ENCODE measurements at regions of chr19 and their contacts with region 1.

Region 1: GRCh38 chr19:16771618-16772017 is 52.0 kb downstream of the NWD1 start:
- DNase-seq: peak in 1 of 2 donors; percentile 89
- H3K4me3 ChIP-seq: no peak overlapping the region
- H3K27ac ChIP-seq: no peak overlapping the region
- H3K4me1 ChIP-seq: no peaks in the 10 kb centered on the region
- H3K27me3 ChIP-seq: no peaks in the 10 kb centered on the region
- CTCF ChIP-seq: peak; percentile 57 to 85 (median 83)

Region 2: GRCh38 chr19:16737911-16738310 is 33.7 kb before region 1 on chr19:
- intact Hi-C with region 1: no loop called
- DNase-seq: no peak
- H3K4me3 ChIP-seq: no peak overlapping the region
- H3K27ac ChIP-seq: no peak overlapping the region
- H3K4me1 ChIP-seq: peaks cover 2 to 5% of the 10 kb centered on the region in 2 donors
- H3K27me3 ChIP-seq: no peaks in the 10 kb centered on the region
- CTCF ChIP-seq: no peak

Region 3: GRCh38 chr19:16829010-16829821 is 57.6 kb after region 1 on chr19 and contains the start of gene SIN3B:
- intact Hi-C with region 1: loop called (anchors 5 kb)
- DNase-seq: peak; percentile 14 to 92
- H3K4me3 ChIP-seq: peak within 1 kb of the TSS; percentile 82 to 96
- H3K27ac ChIP-seq: peak within 1 kb of the TSS; percentile 71 to 80
- H3K4me1 ChIP-seq: peaks cover 5 to 7% of the 10 kb centered on the region in 2 donors
- H3K27me3 ChIP-seq: no peaks in the 10 kb centered on the region
- CTCF ChIP-seq: no peak
- total RNA-seq, gene SIN3B: 72.3 TPM

Region 4: GRCh38 chr19:17052439-17053210 is 281.0 kb after region 1 on chr19:
- intact Hi-C with region 1: loop called (anchors 1 kb)
- DNase-seq: no peak
- H3K4me3 ChIP-seq: no peak overlapping the region
- H3K27ac ChIP-seq: no peak overlapping the region
- H3K4me1 ChIP-seq: no peaks in the 10 kb centered on the region
- H3K27me3 ChIP-seq: no peaks in the 10 kb centered on the region
- CTCF ChIP-seq: peak; percentile 20 to 54 (median 36)